Head of caudate nucleus (tissue), 42 donors: ENCODE measurements at regions of chr3 and their contacts with region 1.

Region 1: GRCh38 chr3:156674046-156674910 is at the start of gene TIPARP:
- DNase-seq: peak; percentile 96 to 100 (median 99)

Region 2: GRCh38 chr3:156554842-156555687 is 119.2 kb before region 1 on chr3 and contains the start of gene SSR3:
- intact Hi-C with region 1: loop called (anchors 2 kb)
- DNase-seq: peak; percentile 98 to 100 (median 99)

Region 3: GRCh38 chr3:156586905-156587759 is 87.1 kb before region 1 on chr3:
- intact Hi-C with region 1: no loop called
- DNase-seq: peak in 1 of 42 donors; percentile 58

Region 4: GRCh38 chr3:156743859-156744258 is 69.6 kb after region 1 on chr3:
- intact Hi-C with region 1: no loop called
- DNase-seq: no peak

Region 5: GRCh38 chr3:156760333-156760732 is 86.1 kb after region 1 on chr3:
- intact Hi-C with region 1: no loop called
- DNase-seq: no peak

Region 6: DNA sequence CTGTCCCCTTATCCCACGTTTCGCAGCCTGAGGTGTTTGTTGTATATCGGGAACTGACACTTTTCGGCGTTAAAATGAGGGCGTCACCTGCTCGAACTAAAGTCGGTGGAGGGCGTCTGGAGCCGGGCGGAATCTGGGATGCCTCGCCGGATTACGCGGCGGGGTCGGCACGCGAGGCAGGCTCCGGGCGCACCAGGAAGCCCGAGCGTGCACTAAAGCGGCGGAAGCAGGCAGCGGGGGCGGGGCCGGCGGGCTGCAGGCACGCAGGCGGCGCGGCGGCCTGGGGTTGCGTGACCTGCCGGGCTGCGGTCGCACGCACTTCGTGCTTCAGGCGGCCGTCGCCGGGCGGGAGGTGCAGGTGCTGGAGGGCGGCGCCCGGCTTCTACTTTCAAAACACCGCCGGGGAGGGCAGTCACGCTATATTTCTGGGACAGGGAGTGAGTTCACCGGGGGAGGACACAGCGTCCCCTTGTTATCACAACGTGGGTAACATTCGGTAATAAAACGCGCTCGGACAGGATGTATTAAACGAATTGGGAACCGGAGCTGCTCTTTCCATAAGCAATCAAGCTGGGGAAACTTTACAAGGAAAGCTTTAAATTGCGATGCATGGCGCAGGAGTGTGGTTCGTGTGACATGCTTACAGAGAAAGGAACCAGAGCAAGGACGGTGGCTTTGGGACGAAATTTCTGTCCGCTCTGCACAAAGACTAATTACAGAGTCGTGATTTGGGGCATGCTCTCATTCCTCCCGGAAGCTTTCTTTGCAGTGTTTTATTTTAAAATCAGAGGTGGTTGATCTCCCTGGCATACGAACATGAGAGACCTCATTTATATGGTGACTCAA is 142.7 kb after region 1 on chr3:
- intact Hi-C with region 1: loop called (anchors 5 kb)
- DNase-seq: peak; percentile 34 to 85 (median 68)

Region 7: DNA sequence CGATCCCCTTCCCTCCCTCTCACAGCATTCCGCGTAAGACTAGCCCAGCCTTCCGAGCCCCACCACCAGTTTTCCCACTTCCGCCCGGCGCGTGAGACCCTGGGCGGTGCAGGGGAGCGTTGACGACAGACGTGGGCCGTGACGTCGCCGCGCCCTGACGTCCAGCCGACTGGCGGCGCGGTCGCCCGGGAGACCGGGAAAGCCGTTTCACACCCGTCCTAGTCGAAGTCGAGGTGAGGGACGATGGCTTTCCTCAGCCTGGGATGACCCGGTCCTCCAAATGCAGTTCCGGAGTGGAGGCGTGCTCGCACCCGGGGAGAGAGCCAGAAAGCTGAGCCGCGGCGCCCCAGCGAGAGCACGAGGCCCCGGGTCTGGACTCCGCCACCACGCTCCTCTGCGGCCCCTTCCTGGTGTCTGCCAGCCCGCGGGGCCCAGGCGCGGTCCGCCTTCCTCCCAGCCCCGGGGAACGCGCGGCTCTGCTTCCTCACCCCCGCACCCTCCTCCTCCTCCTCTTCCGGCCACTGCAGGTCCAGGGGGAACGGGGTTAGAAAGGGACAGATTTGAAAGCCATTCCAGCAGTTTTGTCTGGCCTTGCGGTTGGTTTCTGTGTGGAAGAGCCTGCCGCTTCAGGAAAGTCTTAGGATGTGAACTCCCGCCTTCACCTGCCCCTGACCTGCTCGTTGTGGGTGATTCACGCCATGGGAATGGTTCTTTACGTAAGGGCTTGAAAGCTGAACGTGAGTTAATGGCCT is 152.0 kb after region 1 on chr3 and contains the start of gene LEKR1:
- intact Hi-C with region 1: loop called (anchors 5 kb)
- DNase-seq: peak; percentile 50 to 92 (median 82)

Region 8: DNA sequence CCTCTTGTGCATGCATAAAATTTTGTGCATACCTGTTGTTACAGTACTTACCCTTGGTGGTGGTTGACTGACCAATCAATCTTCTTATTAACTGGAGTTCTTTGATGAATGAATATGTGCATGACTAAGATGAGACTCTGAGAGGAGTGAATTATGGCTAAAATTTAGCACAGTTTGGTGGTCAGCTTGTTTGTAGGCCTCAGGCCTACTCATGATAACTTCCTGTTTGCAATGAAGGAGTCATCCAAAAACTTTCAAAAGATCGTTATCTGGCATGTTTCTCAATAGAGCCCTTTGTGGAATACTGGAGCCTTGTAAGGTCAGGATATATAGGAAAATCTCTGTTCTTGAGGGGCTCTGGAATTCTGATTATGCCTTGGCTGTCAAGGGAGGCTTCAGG is 218.4 kb after region 1 on chr3:
- intact Hi-C with region 1: no loop called
- DNase-seq: no peak

Region 9: DNA sequence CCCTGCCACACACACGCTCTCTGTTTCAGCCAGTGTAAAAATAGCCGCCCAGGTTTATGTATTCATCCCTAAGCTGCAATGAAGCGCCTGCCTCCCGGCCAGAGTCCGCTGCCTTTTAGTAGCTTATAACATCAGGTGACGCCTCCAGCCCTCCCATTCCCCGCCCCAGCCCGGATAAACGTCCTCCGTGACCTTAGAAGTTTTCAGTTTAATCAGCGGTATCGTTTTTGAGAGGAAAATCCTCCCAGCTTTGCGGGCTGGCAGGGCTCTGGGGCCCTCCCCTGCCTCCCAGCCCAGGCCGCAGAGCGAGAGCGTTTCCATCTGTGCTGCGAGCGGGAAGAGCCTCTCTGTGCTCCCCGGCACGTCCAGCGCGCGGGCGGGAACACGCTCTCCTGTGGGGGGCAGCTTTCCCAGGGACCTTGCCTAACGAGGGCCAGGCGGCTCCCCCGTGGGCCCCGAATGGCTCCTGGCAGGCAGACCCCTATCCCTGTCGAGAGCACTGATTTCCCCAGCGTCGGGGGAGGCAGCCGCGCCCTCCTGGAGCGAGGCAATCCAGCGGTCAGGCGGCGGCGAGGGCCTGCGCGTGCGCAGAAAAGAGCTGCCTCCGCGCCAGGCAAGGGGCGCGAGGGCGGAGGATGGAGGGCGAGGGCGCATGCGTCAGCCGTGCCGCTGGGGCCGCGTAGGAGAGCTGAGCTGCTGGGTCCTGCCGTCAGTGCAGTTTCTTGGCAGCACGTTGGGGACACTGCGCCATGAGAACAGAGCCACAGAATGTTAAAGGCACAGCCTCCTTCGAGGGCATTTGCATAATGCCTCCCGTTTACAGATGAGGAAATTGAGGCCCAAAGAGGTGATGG is 414.6 kb after region 1 on chr3:
- intact Hi-C with region 1: loop called (anchors 2 kb)
- DNase-seq: peak; percentile 90 to 98 (median 96)

Region 10: DNA sequence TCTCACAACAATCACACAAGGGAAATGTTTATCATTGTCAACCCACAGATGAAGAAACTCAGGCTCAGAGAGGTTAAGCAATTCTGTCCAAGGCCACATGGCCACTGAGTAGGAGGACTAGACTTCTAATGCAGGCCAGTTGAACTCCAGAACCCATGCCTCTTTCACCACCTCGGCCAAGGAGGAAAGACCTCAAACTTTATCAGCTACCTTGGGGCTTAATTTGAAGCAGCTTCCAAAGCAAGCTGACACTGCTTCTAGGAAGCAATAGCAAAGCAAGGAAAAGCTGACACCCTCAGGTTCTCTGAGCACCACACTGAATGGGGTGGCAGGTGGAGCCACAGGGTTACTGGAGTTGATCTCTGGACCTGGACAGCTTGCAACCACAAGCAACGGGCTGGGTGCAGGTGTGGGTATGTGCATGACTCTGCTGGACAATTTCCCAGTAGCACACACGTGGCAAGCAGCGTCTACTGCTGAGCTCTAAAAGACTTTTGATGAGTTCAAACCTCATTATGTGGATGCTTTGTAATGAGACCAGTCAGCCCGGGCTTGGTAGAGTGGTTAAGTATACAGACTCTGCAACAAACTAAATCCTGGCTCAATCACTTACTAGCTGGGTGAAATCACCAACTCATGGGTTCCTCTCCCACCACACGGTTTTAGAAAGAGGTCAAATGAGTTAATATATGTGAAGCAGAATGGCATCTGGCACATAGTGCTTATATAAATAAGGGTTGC is 462.5 kb after region 1 on chr3:
- intact Hi-C with region 1: loop called (anchors 5 kb)
- DNase-seq: peak in 2 of 42 donors; percentile 29 to 44